ENCODE measurements at regions of chr7 and their contacts with region 1.

Region 1: DNA sequence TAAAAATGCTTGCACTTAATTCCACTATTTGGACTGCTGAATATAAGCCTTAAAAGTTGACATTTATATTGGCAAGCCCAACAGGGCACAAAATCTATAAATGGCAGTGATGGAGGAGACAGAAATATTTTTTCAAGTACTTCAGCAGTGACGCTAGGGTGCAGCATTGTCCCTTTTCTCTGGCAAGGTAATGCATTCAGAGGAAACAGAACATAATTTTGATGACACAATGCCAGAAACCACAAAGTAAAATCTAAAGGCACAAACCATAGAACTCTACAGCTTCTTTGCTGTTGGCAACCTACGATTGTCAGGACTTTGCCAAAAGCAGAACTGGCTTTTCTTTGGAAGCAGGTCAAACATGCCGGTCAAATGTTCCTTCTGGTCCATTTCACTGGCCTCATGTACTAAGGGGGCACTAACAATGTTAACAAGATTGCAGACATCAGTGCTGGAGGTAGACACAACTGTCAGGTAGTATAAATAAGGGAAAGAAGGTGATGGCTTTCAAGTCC is 30.9 kb upstream of the FAM133B start:
- DNase-seq: peak in 5 of 10 donors; percentile 36 to 70 (median 49)
- H3K4me3 ChIP-seq: peak overlapping the region in 3 of 59 donors; percentile 6 to 35 (median 6)
- H3K27ac ChIP-seq: peak overlapping the region in 43 of 59 donors; percentile 1 to 74 (median 43)
- H3K27me3 ChIP-seq: no peaks in the 10 kb centered on the region
- CTCF ChIP-seq: peak; percentile 61 to 95 (median 83)

Region 2: GRCh38 chr7:92682903-92683539 is 61.9 kb after region 1 on chr7:
- intact Hi-C with region 1: loop called in 1 of 2 experiments (anchors 5 kb)
- DNase-seq: no peak
- H3K4me3 ChIP-seq: no peak overlapping the region
- H3K27ac ChIP-seq: peak overlapping the region in 6 of 59 donors; percentile 2 to 67 (median 12)
- H3K27me3 ChIP-seq: no peaks in the 10 kb centered on the region
- CTCF ChIP-seq: no peak

Region 3: DNA sequence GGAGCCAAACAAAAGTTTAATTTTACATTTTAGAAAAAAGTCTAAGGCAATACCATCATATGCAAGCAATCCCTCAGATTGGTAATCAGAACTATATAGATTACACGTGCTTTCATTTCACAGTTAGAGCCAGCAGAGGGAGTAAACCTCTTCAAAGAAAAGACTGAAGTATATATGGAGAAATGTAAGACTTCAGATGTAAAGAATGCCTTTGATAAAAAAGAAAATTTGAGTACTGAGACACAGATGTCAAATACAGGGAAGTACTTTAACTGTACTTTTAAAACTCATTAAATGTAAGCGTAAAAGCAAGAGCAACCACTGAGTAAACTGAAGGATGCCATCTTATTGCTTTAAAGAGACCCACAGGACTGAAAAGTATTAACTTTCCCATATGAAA is 70.5 kb after region 1 on chr7:
- intact Hi-C with region 1: loop called in 1 of 2 experiments (anchors 5 kb)
- DNase-seq: no peak
- H3K4me3 ChIP-seq: no peak overlapping the region
- H3K27ac ChIP-seq: peak overlapping the region in 6 of 59 donors; percentile 10 to 50 (median 36)
- H3K27me3 ChIP-seq: no peaks in the 10 kb centered on the region
- CTCF ChIP-seq: peak; percentile 36 to 78 (median 62)

Region 4: DNA sequence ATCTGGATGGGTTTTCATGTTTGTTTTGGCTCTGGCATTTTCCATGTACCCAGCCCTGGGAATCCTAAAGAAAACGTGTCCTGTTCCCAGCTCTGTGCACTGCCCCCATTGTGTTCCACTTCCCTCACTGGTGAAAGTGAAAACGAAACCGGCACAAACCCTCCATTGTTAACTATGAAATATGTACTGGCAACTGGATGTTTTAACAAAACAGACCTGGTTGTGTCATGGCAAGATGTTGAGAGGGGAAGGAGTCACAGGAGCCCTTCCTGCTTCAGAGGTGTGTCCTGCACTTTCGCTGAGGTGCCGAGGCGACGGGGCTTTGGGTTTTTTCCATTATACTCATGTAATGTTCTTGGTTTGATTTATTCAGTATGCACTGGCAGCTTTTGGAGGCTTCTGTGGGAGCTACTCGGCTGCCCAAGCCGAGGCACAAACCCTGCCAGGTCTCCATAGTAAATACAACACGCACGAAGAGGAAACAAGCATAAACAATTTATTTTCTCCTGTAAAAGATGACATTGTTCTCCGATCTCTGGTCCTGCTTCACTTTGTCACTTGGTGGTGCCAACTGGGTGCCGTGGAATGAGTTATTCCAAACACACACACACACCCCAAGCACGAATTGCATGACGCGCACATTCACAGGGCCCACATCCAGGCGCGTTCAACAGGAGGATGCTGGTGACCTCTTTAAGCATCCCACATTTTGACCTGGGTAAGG is 97.1 kb after region 1 on chr7:
- intact Hi-C with region 1: loop called in 1 of 2 experiments (anchors 5 kb)
- DNase-seq: peak in 9 of 10 donors; percentile 45 to 75 (median 65)
- H3K4me3 ChIP-seq: peak overlapping the region; percentile 40 to 80 (median 65)
- H3K27ac ChIP-seq: peak overlapping the region; percentile 88 to 99 (median 97)
- H3K27me3 ChIP-seq: no peaks in the 10 kb centered on the region
- CTCF ChIP-seq: peak in 11 of 56 donors; percentile 6 to 33 (median 14)

Region 5: DNA sequence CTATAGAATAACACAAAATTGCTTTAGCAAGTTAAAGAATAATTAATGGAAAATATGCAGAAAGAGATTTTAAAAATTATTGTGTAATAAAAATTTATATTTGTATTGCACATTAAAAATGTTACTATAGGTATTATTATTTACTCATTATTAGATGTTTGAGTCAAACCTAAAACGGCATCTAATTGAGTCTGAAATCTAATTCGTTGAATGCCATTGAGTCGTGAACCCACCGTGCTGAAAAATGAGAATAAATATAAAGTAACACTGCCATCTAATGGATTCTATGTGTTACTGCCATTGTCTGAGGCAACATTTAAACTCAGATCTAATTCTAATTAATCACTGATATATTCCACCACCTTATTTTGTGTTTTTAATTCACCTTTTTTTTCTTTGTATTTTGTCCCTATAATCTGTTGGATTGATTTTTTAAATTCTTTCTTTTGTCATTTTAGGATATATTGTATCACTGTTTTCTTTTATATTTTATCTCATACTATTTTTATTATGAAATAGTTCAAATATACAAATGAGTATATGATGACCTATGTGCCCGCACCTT is 434.5 kb after region 1 on chr7:
- intact Hi-C with region 1: loop called (anchors 5 kb)
- DNase-seq: no peak
- H3K4me3 ChIP-seq: peak overlapping the region in 1 of 59 donors; percentile 5
- H3K27ac ChIP-seq: no peak overlapping the region
- H3K27me3 ChIP-seq: peaks cover 0 to 4% (median 0%) of the 10 kb centered on the region in 45 donors
- CTCF ChIP-seq: peak; percentile 65 to 96 (median 82)

Region 6: GRCh38 chr7:93453264-93453663 is 832.2 kb after region 1 on chr7:
- intact Hi-C with region 1: no loop called
- DNase-seq: no peak
- H3K4me3 ChIP-seq: no peak overlapping the region
- H3K27ac ChIP-seq: no peak overlapping the region
- H3K27me3 ChIP-seq: peaks cover 0 to 17% (median 0%) of the 10 kb centered on the region in 45 donors
- CTCF ChIP-seq: no peak

Measured in dorsolateral prefrontal cortex (tissue), 120 donors.